ENCODE measurements at regions of chr3 and their contacts with region 1.

Region 1: DNA sequence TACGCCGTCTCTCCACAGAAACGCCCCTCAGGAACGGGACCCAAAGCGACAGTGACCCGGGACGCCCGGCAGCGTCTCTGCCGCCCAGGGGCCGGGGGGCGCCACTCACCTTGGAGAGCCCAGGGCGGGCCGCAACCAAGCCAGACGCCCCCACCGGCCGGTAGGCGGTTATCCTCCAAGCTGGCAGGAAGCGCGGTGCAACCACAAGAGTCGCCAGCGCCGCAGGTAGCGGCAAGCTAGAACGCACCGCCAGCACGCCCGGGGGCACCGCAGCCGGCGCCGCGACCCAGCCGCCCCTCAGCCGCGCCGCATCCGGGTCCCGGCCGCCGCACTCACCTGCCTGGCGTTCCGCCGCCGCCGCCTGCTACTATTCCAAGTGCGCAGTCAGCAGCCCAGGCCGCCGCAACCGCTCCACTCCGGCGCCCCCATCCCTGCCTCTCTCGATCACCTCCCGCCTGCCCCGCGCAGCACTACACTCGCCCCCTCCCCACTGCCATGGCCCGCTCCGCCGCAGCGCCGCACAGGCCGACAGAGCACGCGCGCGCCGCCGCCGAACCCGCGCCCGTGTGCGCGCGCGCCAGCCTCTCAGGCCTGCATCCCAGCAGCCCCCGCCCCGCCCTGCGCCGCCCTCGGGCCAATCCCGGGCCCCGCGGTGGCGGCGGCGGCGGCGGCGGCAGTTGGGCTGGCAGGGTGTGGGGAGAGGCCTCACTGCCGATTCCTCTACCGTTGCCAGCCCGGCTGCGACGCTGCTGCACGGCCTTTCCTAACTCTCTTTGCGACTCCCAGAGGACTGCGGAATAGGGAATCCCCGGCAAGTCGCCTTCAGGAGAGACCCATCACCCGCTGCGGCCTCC is at the start of gene PIK3CB:
- DNase-seq: peak; percentile 81 to 88
- ATAC-seq: peak; percentile 80 to 82
- H3K4me3 ChIP-seq: peak within 1 kb of the TSS; percentile 63 to 91 (median 78)
- H3K27ac ChIP-seq: peak within 1 kb of the TSS; percentile 88 to 95 (median 93)
- H3K4me1 ChIP-seq: peaks cover 11 to 14% of the 10 kb centered on the region in 2 donors
- H3K27me3 ChIP-seq: no peaks in the 10 kb centered on the region
- CTCF ChIP-seq: peak; percentile 0 to 48 (median 31)
- POLR2A ChIP-seq: peak; percentile 89 to 91
- total RNA-seq, gene PIK3CB: 24.9 to 94.7 (median 36.8) TPM

Region 2: GRCh38 chr3:138608322-138609135 is 226.1 kb before region 1 on chr3 and contains the start of gene FAIM:
- in situ Hi-C with region 1: no loop called
- intact Hi-C with region 1: loop called (anchors 5 kb)
- DNase-seq: peak; percentile 22 to 63
- ATAC-seq: peak; percentile 83 to 86
- H3K4me3 ChIP-seq: peak within 1 kb of the TSS; percentile 63 to 82 (median 73)
- H3K27ac ChIP-seq: peak within 1 kb of the TSS; percentile 85 to 92 (median 90)
- H3K4me1 ChIP-seq: peaks cover 0 to 7% of the 10 kb centered on the region in 2 donors
- H3K27me3 ChIP-seq: peaks cover 0 to 3% (median 0%) of the 10 kb centered on the region in 3 donors
- CTCF ChIP-seq: no peak
- POLR2A ChIP-seq: peak in 1 of 2 donors; percentile 6
- total RNA-seq, gene FAIM: 0.88 to 3.0 (median 1.1) TPM in 3 of 4 donors, not detected in the other

Region 3: DNA sequence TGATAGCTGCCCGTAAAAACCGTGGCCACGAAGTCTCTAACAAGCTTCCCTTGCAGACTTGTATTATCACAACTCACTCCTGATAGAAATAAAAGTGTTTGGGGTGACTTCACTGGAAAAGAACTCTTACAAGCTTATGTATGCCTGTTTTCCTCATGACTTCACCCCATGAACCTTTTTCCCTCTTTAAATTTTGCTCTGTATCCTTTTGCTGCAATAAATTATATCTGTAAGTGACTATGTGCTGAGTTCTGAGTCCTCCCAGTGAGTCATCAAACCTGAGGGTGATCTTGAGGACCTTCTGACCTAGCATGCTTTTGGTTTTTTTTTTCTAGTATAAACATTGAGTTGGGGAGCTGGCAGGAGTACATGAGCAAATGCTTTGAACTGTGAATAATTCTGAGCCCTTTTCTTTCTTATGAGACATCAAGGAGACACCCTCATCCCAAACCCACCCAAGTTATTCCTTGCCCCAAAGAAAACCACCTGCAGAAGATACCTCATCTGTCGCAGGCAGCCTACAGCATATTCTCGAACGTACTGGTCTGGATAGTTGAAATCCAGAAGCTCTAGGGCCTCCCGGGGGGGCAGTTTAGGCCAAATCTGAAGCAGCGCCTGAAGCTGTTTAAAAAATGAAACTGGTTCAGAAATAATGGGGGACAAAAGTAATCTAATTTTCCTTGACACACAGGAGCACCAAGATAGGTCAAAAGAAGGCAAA is 140.1 kb before region 1 on chr3:
- in situ Hi-C with region 1: no loop called
- intact Hi-C with region 1: loop called (anchors 5 kb)
- DNase-seq: no peak
- ATAC-seq: no peak
- H3K4me3 ChIP-seq: no peak overlapping the region
- H3K27ac ChIP-seq: no peak overlapping the region
- H3K4me1 ChIP-seq: no peaks in the 10 kb centered on the region
- H3K27me3 ChIP-seq: no peaks in the 10 kb centered on the region
- CTCF ChIP-seq: no peak
- POLR2A ChIP-seq: no peak

Region 4: DNA sequence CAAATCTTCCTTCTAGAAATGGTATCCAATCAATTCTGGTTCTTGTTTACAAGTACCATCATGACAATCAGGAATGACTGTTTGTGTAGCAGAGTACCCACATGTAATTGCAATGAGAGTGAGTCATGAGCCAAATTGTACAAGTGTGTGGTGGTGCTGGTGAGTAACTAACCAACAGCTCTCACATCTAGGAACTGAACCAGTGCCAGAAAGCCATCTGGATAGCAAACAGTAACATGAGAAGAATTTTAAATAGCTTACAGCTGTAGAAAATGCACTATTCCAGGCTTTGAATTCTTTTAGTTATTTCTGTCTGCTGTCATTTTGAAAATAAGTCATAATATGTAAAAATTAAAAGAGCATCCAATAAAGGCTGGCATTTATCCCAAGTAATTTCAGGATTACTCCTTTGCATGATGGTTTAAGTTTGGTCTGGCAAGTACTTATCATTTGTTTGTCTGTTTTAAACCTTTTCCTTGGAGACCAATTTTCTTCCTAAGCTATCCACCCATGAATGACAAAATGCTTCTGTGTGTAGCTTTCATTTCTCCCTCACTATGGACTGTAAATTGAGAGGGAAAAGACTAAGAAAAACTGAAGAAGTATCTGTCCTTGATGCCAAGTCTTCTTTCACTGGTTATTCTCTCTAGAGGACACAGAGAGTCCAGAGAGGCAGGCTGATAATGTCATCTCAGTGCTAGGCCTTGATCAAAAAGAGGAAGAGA is 59.9 kb before region 1 on chr3:
- in situ Hi-C with region 1: no loop called
- intact Hi-C with region 1: loop called (anchors 2 kb)
- DNase-seq: peak; percentile 75 to 89
- ATAC-seq: peak; percentile 99
- H3K4me3 ChIP-seq: no peak overlapping the region
- H3K27ac ChIP-seq: peak overlapping the region; percentile 77 to 86 (median 78)
- H3K4me1 ChIP-seq: peaks cover 26 to 43% of the 10 kb centered on the region in 2 donors
- H3K27me3 ChIP-seq: no peaks in the 10 kb centered on the region
- CTCF ChIP-seq: no peak
- POLR2A ChIP-seq: no peak

Region 5: DNA sequence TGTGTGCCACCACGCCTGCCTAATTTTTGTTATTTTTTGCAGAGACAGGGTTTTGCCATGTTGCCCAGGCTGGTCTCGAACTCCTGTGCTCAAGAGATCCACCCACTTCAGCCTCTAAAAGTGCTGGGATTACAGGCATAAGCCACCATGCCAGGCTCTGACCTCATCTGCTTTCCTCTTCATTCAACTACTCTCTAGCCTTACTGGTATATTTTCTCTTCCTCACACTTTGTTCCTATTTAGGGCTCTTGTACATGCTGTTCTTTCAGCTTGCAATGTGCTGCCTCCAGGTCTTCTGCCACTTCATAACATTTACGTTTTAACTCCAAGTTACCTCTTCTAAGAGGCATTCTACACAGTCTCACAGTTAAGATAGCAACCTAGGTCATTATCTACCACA is 34.8 kb before region 1 on chr3:
- in situ Hi-C with region 1: no loop called
- intact Hi-C with region 1: loop called (anchors 2 kb)
- DNase-seq: peak; percentile 35 to 66
- ATAC-seq: peak; percentile 90 to 93
- H3K4me3 ChIP-seq: no peak overlapping the region
- H3K27ac ChIP-seq: peak overlapping the region; percentile 73 to 85 (median 78)
- H3K4me1 ChIP-seq: peaks cover 40 to 46% of the 10 kb centered on the region in 2 donors
- H3K27me3 ChIP-seq: no peaks in the 10 kb centered on the region
- CTCF ChIP-seq: no peak
- POLR2A ChIP-seq: peak; percentile 5 to 36

Region 6: DNA sequence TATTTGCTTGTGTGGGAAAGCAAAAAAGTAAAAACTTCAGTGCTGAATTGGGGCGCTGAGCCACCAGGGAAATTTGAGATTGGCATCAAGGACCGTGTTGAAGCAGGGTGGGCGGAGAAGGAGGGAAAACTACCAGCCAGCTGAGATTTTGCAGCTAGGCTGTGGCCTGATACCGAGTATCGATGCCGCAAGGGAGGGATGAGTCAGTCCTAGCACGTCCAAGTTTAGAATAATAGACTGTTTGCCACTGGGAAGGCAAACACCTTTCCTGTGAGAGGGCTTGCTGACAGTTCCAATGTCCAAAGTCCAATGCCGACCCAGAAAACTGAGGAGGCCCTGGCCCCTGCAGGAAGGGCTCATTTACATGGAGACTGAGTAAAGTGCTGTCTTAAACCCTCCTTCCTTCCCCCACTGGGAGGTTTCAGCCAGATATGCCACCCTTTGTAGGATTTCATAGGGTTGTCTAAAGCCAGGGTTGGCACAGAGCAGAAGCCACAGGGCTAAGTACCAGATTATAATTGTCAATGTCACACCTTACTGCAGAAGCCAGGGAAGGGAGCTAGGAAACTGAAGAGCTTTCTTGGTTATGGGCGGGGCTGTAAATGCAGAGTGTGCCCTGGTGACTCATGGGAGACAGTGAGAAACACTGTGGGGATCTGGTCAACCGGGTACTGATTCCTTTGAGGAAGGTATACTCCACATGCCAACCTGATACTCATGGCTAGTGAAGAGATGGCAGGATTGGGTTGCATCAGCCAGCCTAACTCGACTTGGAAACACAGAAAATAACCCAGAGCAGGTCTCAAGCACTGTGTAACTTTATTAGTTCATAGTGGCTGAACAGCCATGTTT is 28.6 kb after region 1 on chr3:
- in situ Hi-C with region 1: no loop called
- intact Hi-C with region 1: loop called (anchors 2 kb)
- DNase-seq: peak in 1 of 2 donors; percentile 12
- ATAC-seq: peak; percentile 87 to 96
- H3K4me3 ChIP-seq: no peak overlapping the region
- H3K27ac ChIP-seq: peak overlapping the region; percentile 35 to 79 (median 66)
- H3K4me1 ChIP-seq: peaks cover 9 to 13% of the 10 kb centered on the region in 2 donors
- H3K27me3 ChIP-seq: no peaks in the 10 kb centered on the region
- CTCF ChIP-seq: no peak
- POLR2A ChIP-seq: no peak

Region 7: DNA sequence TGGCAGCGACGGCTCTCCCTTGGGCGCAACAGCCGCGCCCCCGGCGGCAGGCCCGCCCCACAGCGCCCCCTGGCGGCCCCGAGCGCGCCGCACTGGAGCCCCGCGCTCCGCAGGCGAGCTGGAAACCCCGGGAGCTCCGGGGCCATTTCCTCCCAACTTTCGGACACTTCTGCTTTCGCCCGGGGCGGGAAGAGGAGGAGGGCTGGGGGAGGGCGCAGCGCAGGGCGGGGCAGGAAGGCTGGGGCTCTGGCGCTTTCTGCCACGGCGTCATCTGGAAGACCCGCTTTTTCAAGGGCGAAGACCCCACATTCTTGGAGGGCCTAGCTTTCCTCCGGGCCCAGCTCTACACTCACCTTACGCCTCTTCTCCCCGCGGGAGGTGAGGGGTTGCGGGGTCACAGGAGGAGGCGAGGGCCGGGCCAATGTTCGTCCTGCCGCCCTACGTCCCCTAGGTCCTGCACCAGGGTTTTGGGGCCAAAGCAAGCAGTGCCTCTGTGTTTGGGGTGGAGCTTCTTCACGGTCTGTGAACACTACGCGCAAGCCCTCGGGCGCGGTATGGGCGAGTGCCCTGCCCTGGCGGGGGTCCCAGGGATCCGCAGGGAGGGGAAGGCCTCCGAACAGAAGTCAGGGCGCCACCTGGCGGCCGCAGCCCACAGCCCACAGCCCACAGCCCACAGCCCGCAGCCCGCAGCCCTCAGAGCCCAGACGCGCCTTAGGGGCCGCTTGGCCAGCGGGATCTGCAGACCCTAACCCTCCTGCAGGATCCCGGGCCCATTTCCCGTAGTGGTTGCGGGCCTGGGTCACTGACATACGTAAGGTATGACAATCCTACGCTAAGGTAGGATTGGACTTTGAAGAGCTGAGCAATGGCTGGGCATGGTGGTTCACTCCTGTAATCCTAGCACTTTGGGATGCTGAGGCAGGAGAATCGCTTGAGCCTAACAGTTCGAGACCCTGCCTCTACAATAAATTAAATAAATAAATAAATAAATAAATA is 81.2 kb after region 1 on chr3:
- in situ Hi-C with region 1: loop called in 1 of 4 experiments (anchors 10 kb)
- intact Hi-C with region 1: loop called (anchors 1 kb)
- DNase-seq: peak; percentile 82 to 94
- ATAC-seq: peak; percentile 91 to 93
- H3K4me3 ChIP-seq: peak overlapping the region; percentile 80 to 98 (median 87)
- H3K27ac ChIP-seq: peak overlapping the region; percentile 92 to 95 (median 94)
- H3K4me1 ChIP-seq: peaks cover 3 to 4% of the 10 kb centered on the region in 2 donors
- H3K27me3 ChIP-seq: no peaks in the 10 kb centered on the region
- CTCF ChIP-seq: peak; percentile 86 to 94 (median 89)
- POLR2A ChIP-seq: no peak